CD14-positive monocyte (primary cell): ENCODE measurements at regions of chr7 and their contacts with region 1.

Region 1: DNA sequence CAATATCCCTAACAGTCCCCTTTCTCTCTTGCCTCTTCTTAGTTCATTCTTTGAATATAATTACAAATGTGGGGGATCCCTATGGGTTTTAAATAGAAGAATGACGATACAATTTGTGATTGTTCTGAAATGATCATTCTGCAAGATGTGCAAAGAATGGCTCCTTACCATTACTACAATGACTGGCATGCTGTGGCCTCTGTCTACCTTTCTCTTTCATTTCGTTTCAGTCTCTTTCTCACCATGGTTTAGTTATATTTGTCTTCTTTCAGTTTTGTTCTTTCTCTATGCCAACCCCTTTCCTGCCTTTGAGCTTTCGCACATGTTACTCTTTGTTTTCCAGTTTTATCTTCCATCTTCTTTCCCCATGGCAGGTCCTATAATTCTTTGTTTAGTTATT is 176.5 kb downstream of the SUGCT start:
- DNase-seq: no peak
- H3K4me3 ChIP-seq: no peak overlapping the region
- H3K4me3 Mint-ChIP-seq: no peak overlapping the region
- H3K27ac ChIP-seq: no peak overlapping the region
- H3K27ac Mint-ChIP-seq: peak overlapping the region in 1 of 7 donors; percentile 35
- H3K4me1 ChIP-seq: no peaks in the 10 kb centered on the region
- H3K4me1 Mint-ChIP-seq: no peaks in the 10 kb centered on the region
- H3K27me3 ChIP-seq: no peaks in the 10 kb centered on the region
- H3K27me3 Mint-ChIP-seq: no peaks in the 10 kb centered on the region
- CTCF ChIP-seq: no peak

Region 2: DNA sequence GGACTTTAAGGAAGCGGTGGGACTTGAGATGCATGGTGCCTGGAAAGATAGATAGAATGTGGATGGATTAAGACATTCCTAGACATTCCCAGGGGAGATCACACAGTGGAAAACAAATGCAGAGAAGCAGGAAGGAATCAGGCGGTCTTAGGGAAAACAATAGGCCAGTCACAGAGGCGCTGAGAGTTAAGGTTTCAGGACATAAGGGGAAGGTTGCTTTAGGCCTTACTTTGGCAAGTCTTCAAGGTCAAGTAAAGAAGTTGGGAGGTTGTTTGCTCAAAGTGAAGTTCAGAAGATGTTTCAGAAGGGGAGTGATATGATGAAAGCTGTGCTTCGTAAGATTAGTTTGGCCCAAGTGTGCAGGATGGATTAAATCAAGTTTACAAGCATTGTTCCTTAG is 67.1 kb before region 1 on chr7:
- intact Hi-C with region 1: loop called in 1 of 2 experiments (anchors 10 kb)
- DNase-seq: no peak
- H3K4me3 ChIP-seq: no peak overlapping the region
- H3K4me3 Mint-ChIP-seq: no peak overlapping the region
- H3K27ac ChIP-seq: no peak overlapping the region
- H3K27ac Mint-ChIP-seq: no peak overlapping the region
- H3K4me1 ChIP-seq: no peaks in the 10 kb centered on the region
- H3K4me1 Mint-ChIP-seq: no peaks in the 10 kb centered on the region
- H3K27me3 ChIP-seq: no peaks in the 10 kb centered on the region
- H3K27me3 Mint-ChIP-seq: peaks cover 0 to 2% (median 1%) of the 10 kb centered on the region in 3 donors
- CTCF ChIP-seq: no peak